ENCODE measurements at regions of chr14 and their contacts with region 1.

Region 1: GRCh38 chr14:20855652-20856291 is 35.4 kb upstream of the RNASE3 start:
- DNase-seq: peak in 1 of 2 donors; percentile 24
- ATAC-seq: peak; percentile 74 to 88 (median 80)
- H3K4me3 ChIP-seq: no peak overlapping the region
- H3K27ac ChIP-seq: no peak overlapping the region
- H3K4me1 ChIP-seq: no peaks in the 10 kb centered on the region
- H3K27me3 ChIP-seq: peaks cover 0 to 7% (median 0%) of the 10 kb centered on the region in 3 donors
- CTCF ChIP-seq: peak; percentile 67

Region 2: DNA sequence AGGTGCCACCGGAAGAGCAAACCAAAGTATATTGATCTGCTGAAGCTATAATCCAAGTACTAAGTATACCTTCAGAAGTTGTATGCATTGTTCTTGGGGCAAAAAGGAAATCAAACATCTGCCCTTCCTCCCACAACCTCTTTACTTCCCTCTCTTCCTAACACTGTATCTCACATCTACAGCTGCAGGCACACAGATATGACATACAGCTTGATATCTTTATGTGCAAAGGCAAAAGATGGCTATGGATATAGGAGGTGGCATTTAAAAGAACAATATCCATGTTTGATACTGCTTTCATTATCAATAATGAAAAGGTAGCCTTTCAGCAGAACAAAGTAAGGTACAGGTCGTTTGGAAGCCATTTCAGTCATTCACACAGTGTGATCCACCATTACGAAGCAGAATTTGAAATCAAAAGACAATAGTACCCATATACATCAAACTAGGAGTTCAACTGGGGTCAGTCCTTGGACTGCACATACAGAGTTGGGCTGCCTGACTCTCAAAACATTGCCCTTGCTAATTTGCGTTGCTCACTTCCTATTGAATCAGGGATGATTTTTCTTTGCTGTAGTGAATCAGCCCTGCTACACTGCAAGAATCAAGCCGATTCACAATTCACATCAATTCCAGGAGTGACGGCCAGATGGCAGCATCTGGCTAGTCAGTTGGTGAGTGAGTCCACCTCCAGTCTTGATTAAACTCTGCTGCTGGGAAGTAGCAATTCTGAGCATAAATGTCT is 158.3 kb before region 1 on chr14:
- intact Hi-C with region 1: loop called (anchors 1 to 5 kb)
- DNase-seq: peak in 1 of 2 donors; percentile 49
- ATAC-seq: peak; percentile 49 to 84 (median 67)
- H3K4me3 ChIP-seq: no peak overlapping the region
- H3K27ac ChIP-seq: no peak overlapping the region
- H3K4me1 ChIP-seq: no peaks in the 10 kb centered on the region
- H3K27me3 ChIP-seq: no peaks in the 10 kb centered on the region
- CTCF ChIP-seq: peak; percentile 68

Region 3: GRCh38 chr14:20769421-20769820 is 86.4 kb before region 1 on chr14:
- intact Hi-C with region 1: no loop called
- DNase-seq: no peak
- ATAC-seq: no peak
- H3K4me3 ChIP-seq: no peak overlapping the region
- H3K27ac ChIP-seq: no peak overlapping the region
- H3K4me1 ChIP-seq: no peaks in the 10 kb centered on the region
- H3K27me3 ChIP-seq: peaks cover 0 to 3% (median 0%) of the 10 kb centered on the region in 3 donors
- CTCF ChIP-seq: no peak

Region 4: GRCh38 chr14:20970983-20971704 is 115.4 kb after region 1 on chr14:
- intact Hi-C with region 1: loop called (anchors 2 to 10 kb)
- DNase-seq: peak; percentile 83 to 91
- ATAC-seq: peak; percentile 97 to 99 (median 98)
- H3K4me3 ChIP-seq: peak overlapping the region; percentile 75
- H3K27ac ChIP-seq: peak overlapping the region; percentile 53
- H3K4me1 ChIP-seq: peaks cover 4% of the 10 kb centered on the region
- H3K27me3 ChIP-seq: peaks cover 0 to 6% (median 2%) of the 10 kb centered on the region in 3 donors
- CTCF ChIP-seq: peak; percentile 85